ENCODE measurements at regions of chr3 and their contacts with region 1.

Region 1: GRCh38 chr3:88219138-88219792 is 69.5 kb downstream of the C3orf38 start:
- DNase-seq: no peak
- ATAC-seq: peak; percentile 92
- H3K4me3 ChIP-seq: no peak overlapping the region
- H3K27ac ChIP-seq: no peak overlapping the region
- H3K4me1 ChIP-seq: no peaks in the 10 kb centered on the region
- H3K27me3 ChIP-seq: no peaks in the 10 kb centered on the region
- CTCF ChIP-seq: peak; percentile 50 to 65 (median 55)
- EP300 ChIP-seq: no peak
- POLR2A ChIP-seq: no peak
- RAD21 ChIP-seq: peak; percentile 87

Region 2: DNA sequence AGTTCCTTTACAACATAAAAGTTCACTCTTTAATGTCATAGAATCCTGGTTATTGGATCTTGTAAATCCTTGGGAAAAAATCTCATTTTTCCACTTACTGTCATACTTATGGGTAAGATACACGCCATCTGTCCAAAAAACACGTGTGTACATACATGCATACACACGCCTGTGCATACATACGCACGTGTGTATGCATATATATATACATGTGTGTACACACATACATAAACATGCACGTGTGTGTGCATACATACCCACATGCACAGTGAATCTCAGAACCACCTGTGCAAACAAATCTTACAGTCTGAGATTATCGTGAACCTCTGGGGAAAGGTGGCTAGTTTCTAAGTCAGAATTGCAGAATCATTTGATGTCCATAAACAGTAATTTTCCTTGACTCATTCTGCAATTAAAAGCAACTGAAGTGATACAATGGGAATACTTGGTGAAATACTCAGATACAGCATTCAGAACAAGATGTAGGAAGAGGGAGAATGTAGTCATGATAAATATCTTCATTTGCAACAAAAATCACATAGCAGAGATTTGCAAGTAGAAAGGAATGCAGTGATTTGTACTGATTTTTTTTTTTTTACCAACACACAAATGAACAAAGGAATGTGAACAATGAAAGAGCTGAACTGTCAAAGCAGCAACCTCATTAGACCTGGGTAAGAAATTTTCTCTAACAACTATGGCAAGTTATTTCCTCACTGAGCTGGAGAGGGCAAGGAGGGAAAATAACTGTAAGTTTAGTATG is 782.3 kb before region 1 on chr3:
- CTCF ChIA-PET with region 1: no interaction called
- POLR2A ChIA-PET with region 1: no interaction called
- RAD21 ChIA-PET with region 1: no interaction called
- SMC1A ChIA-PET with region 1: no interaction called
- in situ Hi-C with region 1: no loop called
- intact Hi-C with region 1: no loop called
- DNase-seq: no peak
- ATAC-seq: no peak
- H3K4me3 ChIP-seq: no peak overlapping the region
- H3K27ac ChIP-seq: no peak overlapping the region
- H3K4me1 ChIP-seq: no peaks in the 10 kb centered on the region
- H3K27me3 ChIP-seq: no peaks in the 10 kb centered on the region
- CTCF ChIP-seq: no peak
- EP300 ChIP-seq: no peak
- POLR2A ChIP-seq: no peak
- RAD21 ChIP-seq: no peak

Region 3: GRCh38 chr3:88031642-88032077 is 187.6 kb before region 1 on chr3:
- CTCF ChIA-PET with region 1: no interaction called
- POLR2A ChIA-PET with region 1: no interaction called
- RAD21 ChIA-PET with region 1: no interaction called
- SMC1A ChIA-PET with region 1: no interaction called
- in situ Hi-C with region 1: no loop called
- intact Hi-C with region 1: no loop called
- DNase-seq: peak; percentile 26
- ATAC-seq: peak; percentile 92
- H3K4me3 ChIP-seq: peak overlapping the region; percentile 52
- H3K27ac ChIP-seq: peak overlapping the region; percentile 27; the same call in 1 of the 2 replicates
- H3K4me1 ChIP-seq: no peaks in the 10 kb centered on the region
- H3K27me3 ChIP-seq: no peaks in the 10 kb centered on the region
- CTCF ChIP-seq: no peak
- EP300 ChIP-seq: no peak
- POLR2A ChIP-seq: no peak
- RAD21 ChIP-seq: no peak

Region 4: DNA sequence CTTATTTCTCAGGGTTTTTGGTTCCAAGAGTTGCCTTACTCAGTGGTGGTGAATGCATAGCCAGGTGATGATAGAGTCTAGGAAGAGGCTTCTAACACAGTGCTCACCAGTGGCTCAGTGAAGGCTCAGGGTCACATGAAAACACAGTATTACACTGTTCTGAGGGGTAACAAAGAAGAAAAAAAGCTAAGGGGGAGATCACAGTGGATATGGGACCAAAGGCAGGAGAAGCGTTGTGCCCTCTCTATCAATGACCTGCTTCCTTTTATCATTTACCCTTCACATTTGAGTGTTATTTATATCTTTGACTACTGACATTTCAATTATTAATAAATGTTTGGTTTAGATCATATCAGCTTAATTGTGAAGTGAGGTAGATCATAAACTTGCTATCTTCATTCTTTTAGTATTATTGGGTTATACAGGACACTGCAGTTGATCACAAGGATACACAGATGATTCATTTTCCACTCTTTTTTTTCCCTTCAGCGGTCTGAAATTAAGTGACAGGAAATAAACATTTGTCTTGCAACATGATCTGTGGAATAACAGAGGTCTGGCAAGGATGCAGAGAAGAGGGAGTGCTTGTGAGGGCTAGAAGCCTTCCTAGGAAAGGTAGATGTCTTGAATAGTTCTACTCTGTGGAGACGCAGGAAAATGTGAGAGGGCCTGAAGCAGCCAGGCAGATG is 102.2 kb after region 1 on chr3:
- CTCF ChIA-PET with region 1: no interaction called
- POLR2A ChIA-PET with region 1: no interaction called
- RAD21 ChIA-PET with region 1: no interaction called
- SMC1A ChIA-PET with region 1: no interaction called
- in situ Hi-C with region 1: no loop called
- intact Hi-C with region 1: no loop called
- DNase-seq: no peak
- ATAC-seq: no peak
- H3K4me3 ChIP-seq: no peak overlapping the region
- H3K27ac ChIP-seq: no peak overlapping the region
- H3K4me1 ChIP-seq: no peaks in the 10 kb centered on the region
- H3K27me3 ChIP-seq: no peaks in the 10 kb centered on the region
- CTCF ChIP-seq: no peak
- EP300 ChIP-seq: no peak
- POLR2A ChIP-seq: no peak
- RAD21 ChIP-seq: no peak

Region 5: GRCh38 chr3:89098964-89099585 is 879.8 kb after region 1 on chr3:
- CTCF ChIA-PET with region 1: interaction called, 6 read pairs
- POLR2A ChIA-PET with region 1: no interaction called
- RAD21 ChIA-PET with region 1: no interaction called
- SMC1A ChIA-PET with region 1: interaction called, 5 read pairs
- in situ Hi-C with region 1: no loop called
- intact Hi-C with region 1: loop called (anchors 1 kb)
- DNase-seq: no peak
- ATAC-seq: peak; percentile 92
- H3K4me3 ChIP-seq: no peak overlapping the region
- H3K27ac ChIP-seq: no peak overlapping the region
- H3K4me1 ChIP-seq: no peaks in the 10 kb centered on the region
- H3K27me3 ChIP-seq: no peaks in the 10 kb centered on the region
- CTCF ChIP-seq: peak; percentile 84 to 91 (median 89)
- EP300 ChIP-seq: no peak
- POLR2A ChIP-seq: no peak
- RAD21 ChIP-seq: peak; percentile 75

Region 6: GRCh38 chr3:90184861-90185260 is 1965.6 kb after region 1 on chr3:
- CTCF ChIA-PET with region 1: interaction called, 15 read pairs
- POLR2A ChIA-PET with region 1: no interaction called
- RAD21 ChIA-PET with region 1: interaction called, 7 read pairs
- SMC1A ChIA-PET with region 1: interaction called, 4 read pairs
- in situ Hi-C with region 1: no loop called
- intact Hi-C with region 1: no loop called
- DNase-seq: no peak
- ATAC-seq: no peak
- H3K4me3 ChIP-seq: no peak overlapping the region
- H3K27ac ChIP-seq: no peak overlapping the region
- H3K4me1 ChIP-seq: no peaks in the 10 kb centered on the region
- H3K27me3 ChIP-seq: no peaks in the 10 kb centered on the region
- CTCF ChIP-seq: no peak
- EP300 ChIP-seq: no peak
- POLR2A ChIP-seq: no peak
- RAD21 ChIP-seq: no peak

Measured in GM12878 (cell line).